Panc1 (cell line): ENCODE measurements at regions of chr19 and their contacts with region 1.

Region 1: DNA sequence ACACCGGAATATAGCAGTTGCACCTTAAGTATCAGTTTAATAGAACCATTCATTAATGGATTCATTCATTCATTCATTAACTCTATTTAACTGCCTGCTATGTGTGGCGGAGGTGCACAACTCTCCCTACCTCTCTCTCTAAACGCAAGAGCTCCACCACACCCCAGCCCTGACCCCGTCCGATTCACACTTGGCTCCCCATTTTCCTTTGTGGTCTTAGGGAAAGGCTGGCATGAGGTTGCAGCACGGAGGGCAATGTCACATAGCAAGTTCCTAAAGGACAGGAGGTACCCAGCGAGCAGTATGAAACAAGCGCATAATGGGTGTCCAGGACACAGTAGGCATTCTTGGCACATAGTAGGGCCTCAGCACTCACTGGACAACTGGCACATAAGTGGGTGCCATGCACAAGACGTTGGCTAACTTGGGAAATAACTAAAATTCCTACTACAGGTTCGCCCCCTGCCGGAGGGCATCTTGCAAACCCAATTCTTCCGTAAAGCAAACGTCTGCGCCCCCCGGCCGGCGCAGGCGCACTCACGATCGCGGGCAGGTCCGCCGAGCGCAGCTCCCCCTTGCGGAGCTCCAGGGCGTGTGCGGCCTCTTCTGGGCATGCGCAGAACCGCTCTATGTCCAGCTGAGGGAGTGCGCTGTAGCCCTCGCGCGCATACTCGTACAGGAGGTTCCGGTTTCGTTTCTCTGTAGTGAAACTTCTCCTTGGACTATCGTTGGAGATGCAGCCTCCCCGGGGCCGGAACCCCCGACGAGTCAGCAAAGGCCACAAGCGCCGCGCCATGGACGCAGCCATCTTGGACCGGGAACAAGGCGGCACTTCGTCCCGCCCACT is at the start of gene SARS2:
- DNase-seq: peak; percentile 100
- ATAC-seq: peak; percentile 76
- H3K4me3 ChIP-seq: peak within 1 kb of the TSS; percentile 54 to 87
- H3K27ac ChIP-seq: peak within 1 kb of the TSS; percentile 97
- H3K4me1 ChIP-seq: peaks cover 11% of the 10 kb centered on the region
- H3K27me3 ChIP-seq: no peaks in the 10 kb centered on the region
- CTCF ChIP-seq: no peak
- total RNA-seq, gene SARS2: 186 TPM

Region 2: GRCh38 chr19:38527466-38528136 is 402.6 kb before region 1 on chr19:
- CTCF ChIA-PET with region 1: interaction called, 3 read pairs
- POLR2A ChIA-PET with region 1: no interaction called
- in situ Hi-C with region 1: loop called (anchors 10 kb)
- intact Hi-C with region 1: no loop called
- DNase-seq: no peak
- ATAC-seq: peak; percentile 20
- H3K4me3 ChIP-seq: peak overlapping the region in 1 of 2 experiments; percentile 32; a peak in 2 of 4 replicates
- H3K27ac ChIP-seq: no peak overlapping the region
- H3K4me1 ChIP-seq: peaks cover 4% of the 10 kb centered on the region; the same call in 1 of the 2 replicates
- H3K27me3 ChIP-seq: no peaks in the 10 kb centered on the region
- CTCF ChIP-seq: no peak

Region 3: GRCh38 chr19:38658462-38659306 is 271.5 kb before region 1 on chr19:
- CTCF ChIA-PET with region 1: interaction called, 5 read pairs
- POLR2A ChIA-PET with region 1: no interaction called
- in situ Hi-C with region 1: no loop called
- intact Hi-C with region 1: loop called (anchors 10 kb)
- DNase-seq: peak; percentile 100
- ATAC-seq: peak; percentile 59
- H3K4me3 ChIP-seq: peak overlapping the region; percentile 2 to 31; a peak in 3 of 4 replicates
- H3K27ac ChIP-seq: peak overlapping the region; percentile 96
- H3K4me1 ChIP-seq: peaks cover 100% of the 10 kb centered on the region
- H3K27me3 ChIP-seq: no peaks in the 10 kb centered on the region
- CTCF ChIP-seq: no peak

Region 4: GRCh38 chr19:38769635-38770211 is 160.4 kb before region 1 on chr19:
- CTCF ChIA-PET with region 1: no interaction called
- POLR2A ChIA-PET with region 1: no interaction called
- in situ Hi-C with region 1: loop called (anchors 10 kb)
- intact Hi-C with region 1: no loop called
- DNase-seq: no peak
- ATAC-seq: peak; percentile 62
- H3K4me3 ChIP-seq: no peak overlapping the region
- H3K27ac ChIP-seq: peak overlapping the region; percentile 48; the same call in 1 of the 2 replicates
- H3K4me1 ChIP-seq: peaks cover 4% of the 10 kb centered on the region; the same call in 1 of the 2 replicates
- H3K27me3 ChIP-seq: no peaks in the 10 kb centered on the region
- CTCF ChIP-seq: no peak; the same call in 1 of the 2 replicates

Region 5: GRCh38 chr19:38899447-38900219 is 30.5 kb before region 1 on chr19 and contains the starts of genes NFKBIB and SIRT2:
- CTCF ChIA-PET with region 1: interaction called, 19 read pairs
- POLR2A ChIA-PET with region 1: interaction called, 10 read pairs
- in situ Hi-C with region 1: no loop called
- intact Hi-C with region 1: no loop called
- DNase-seq: peak; percentile 100
- ATAC-seq: peak; percentile 97
- H3K4me3 ChIP-seq: peak within 1 kb of the TSS; percentile 55 to 75
- H3K27ac ChIP-seq: peak within 1 kb of the TSS; percentile 89
- H3K4me1 ChIP-seq: peaks cover 21% of the 10 kb centered on the region
- H3K27me3 ChIP-seq: no peaks in the 10 kb centered on the region
- CTCF ChIP-seq: no peak
- total RNA-seq, gene NFKBIB: 185 TPM
- total RNA-seq, gene SIRT2: 162 TPM

Region 6: DNA sequence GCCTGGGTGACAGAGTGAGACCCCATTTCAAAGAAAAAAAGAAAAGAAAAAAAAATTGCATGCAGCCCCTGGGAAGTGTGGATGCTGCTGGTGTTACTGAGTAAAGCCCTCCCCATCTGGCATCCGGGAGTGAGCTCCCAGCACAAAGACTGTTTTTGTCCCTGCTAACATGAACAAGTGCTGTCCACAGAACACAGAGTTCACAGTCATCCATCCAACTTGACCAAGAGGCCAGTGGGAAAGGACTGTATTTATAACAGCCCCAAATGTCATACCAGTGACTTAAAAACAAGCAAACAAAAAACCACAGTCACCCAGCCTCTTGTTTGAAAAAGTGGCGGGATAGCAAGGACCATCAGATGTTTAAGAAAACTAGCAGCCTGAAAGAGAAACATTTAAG is 34.6 kb after region 1 on chr19:
- CTCF ChIA-PET with region 1: no interaction called
- POLR2A ChIA-PET with region 1: no interaction called
- in situ Hi-C with region 1: no loop called
- intact Hi-C with region 1: no loop called
- DNase-seq: no peak
- ATAC-seq: no peak
- H3K4me3 ChIP-seq: no peak overlapping the region
- H3K27ac ChIP-seq: no peak overlapping the region
- H3K4me1 ChIP-seq: peaks cover 7% of the 10 kb centered on the region
- H3K27me3 ChIP-seq: no peaks in the 10 kb centered on the region
- CTCF ChIP-seq: no peak

Region 7: DNA sequence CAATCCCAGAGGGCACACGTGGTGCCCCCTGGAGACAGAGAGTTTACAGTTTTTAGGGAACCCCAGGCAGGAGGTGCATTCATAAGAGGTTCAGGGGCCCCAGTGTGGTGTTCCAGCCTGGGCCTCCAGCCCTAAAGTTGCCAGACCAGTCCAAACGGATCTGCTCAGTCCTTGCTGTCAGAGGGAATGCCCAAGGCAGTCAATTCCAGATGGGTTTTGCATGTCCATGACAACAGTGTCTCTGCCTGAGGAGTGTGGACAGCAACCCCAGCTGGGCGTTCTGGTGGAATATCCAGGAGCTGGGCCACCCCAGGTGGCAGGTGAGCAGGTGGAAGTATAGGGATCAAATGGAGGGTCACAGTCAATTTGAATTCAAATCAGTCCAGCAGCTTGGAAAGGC is 76.9 kb after region 1 on chr19:
- CTCF ChIA-PET with region 1: no interaction called
- POLR2A ChIA-PET with region 1: no interaction called
- in situ Hi-C with region 1: no loop called
- intact Hi-C with region 1: no loop called
- DNase-seq: no peak
- ATAC-seq: peak; percentile 41; the same call in 1 of the 2 replicates
- H3K4me3 ChIP-seq: no peak overlapping the region
- H3K27ac ChIP-seq: no peak overlapping the region
- H3K4me1 ChIP-seq: no peaks in the 10 kb centered on the region
- H3K27me3 ChIP-seq: no peaks in the 10 kb centered on the region
- CTCF ChIP-seq: no peak

Region 8: DNA sequence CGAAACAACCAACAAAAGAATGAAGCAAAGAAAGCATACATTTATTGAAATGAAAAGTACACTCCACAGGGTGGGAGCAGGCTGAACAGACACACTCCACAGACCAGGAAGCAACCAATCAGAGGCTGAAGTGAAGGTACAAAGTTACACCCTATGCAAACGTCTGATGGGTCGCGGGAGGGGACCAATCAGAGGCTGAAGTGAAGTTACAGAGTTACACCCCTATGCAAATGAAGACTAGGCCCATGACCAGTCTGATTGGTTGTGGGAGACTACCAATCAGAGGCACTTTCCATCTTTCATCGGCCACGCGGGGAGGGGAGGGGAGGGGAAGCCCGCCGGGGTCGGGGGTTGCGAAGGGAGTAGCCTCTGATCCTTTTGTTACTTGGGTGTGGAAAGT is 928.4 kb after region 1 on chr19:
- CTCF ChIA-PET with region 1: no interaction called
- POLR2A ChIA-PET with region 1: interaction called, 11 read pairs
- in situ Hi-C with region 1: no loop called
- intact Hi-C with region 1: no loop called
- DNase-seq: no peak
- ATAC-seq: peak; percentile 13; the same call in 1 of the 2 replicates
- H3K4me3 ChIP-seq: no peak overlapping the region
- H3K27ac ChIP-seq: no peak overlapping the region
- H3K4me1 ChIP-seq: peaks cover 4% of the 10 kb centered on the region
- H3K27me3 ChIP-seq: no peaks in the 10 kb centered on the region
- CTCF ChIP-seq: no peak